Activated B cell treated with CpG ODN at 0.5 μM for 24 hours (primary cell): ENCODE measurements at regions of chr9 and their contacts with region 1.

Region 1: DNA sequence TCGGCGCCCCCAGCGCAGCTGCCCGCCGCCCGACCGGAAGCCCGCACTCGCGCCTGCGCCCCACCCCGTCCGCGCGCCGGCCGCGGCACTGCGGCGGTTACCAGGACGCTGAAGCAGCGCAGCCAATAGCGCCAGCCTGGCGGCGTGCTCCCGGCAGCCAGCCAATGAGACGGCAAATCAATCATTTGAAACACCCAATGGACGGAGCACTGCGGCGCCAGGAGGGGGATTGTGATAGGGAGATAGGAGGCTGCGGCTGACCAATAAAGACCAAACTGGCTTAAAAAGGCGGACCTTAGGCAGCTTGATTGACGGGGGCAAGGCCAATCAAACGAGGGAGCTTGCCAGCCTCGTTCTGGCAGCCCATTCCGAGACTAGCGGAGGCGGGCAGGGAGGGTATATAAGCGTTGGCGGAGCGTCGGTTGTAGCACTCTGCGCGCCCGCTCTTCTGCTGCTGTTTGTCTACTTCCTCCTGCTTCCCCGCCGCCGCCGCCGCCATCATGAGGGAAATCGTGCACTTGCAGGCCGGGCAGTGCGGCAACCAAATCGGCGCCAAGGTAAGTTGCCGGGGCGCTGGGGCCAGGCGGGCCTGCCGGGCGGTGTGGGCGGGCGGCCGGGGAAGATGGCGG is at the start of gene TUBB4B:
- DNase-seq: peak; percentile 95
- ATAC-seq: peak; percentile 75
- H3K4me3 Mint-ChIP-seq: peak within 1 kb of the TSS; percentile 88
- H3K27ac Mint-ChIP-seq: peak within 1 kb of the TSS; percentile 93
- H3K4me1 Mint-ChIP-seq: peaks cover 50% of the 10 kb centered on the region
- H3K27me3 Mint-ChIP-seq: no peaks in the 10 kb centered on the region
- CTCF ChIP-seq: no peak
- total RNA-seq, gene TUBB4B: 182 and 197 TPM in 2 replicates

Region 2: DNA sequence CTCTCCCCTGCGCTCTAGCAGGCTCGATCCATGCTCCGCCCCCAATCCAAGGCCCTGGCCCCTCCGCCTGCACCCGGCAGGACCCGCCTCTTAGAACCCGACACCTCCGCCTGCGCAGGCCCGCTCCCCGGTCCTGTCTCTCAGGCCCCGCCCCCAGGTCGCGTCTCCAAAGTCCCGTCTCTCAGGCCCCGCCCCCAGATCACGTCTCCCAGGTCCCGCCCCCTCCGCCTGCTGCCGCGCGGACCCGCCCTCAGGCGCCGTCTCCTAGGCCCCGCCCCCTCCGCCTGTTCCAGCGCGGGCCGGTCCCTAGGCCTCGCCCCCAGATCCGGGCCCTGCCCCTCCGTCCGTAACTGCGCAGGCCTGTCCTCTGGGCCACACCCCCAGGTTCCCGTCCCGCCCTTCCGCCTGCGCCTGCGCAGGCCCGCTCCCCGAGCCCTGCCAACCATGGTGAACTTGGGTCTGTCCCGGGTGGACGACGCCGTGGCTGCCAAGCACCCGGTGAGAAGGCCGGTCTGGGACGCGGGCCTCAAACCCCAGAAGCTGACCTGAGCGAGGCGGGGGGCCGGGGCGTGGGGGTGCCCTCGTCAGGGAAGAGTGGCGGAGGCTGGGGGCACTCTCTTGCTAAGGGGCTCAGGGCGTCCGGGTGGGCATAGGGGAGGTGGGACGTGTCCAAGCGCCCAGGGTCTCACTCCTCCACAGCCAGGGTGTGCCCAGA is 449.9 kb before region 1 on chr9 and contains the start of gene TMEM141:
- CTCF ChIA-PET with region 1: no interaction called
- POLR2A ChIA-PET with region 1: interaction called, 4 read pairs
- intact Hi-C with region 1: loop called (anchors 2 kb)
- DNase-seq: peak; percentile 99
- ATAC-seq: peak; percentile 87
- H3K4me3 Mint-ChIP-seq: peak within 1 kb of the TSS; percentile 86
- H3K27ac Mint-ChIP-seq: peak within 1 kb of the TSS; percentile 90
- H3K4me1 Mint-ChIP-seq: peaks cover 21% of the 10 kb centered on the region
- H3K27me3 Mint-ChIP-seq: no peaks in the 10 kb centered on the region
- CTCF ChIP-seq: no peak
- total RNA-seq, gene TMEM141: 34.9 and 35.8 TPM in 2 replicates

Region 3: DNA sequence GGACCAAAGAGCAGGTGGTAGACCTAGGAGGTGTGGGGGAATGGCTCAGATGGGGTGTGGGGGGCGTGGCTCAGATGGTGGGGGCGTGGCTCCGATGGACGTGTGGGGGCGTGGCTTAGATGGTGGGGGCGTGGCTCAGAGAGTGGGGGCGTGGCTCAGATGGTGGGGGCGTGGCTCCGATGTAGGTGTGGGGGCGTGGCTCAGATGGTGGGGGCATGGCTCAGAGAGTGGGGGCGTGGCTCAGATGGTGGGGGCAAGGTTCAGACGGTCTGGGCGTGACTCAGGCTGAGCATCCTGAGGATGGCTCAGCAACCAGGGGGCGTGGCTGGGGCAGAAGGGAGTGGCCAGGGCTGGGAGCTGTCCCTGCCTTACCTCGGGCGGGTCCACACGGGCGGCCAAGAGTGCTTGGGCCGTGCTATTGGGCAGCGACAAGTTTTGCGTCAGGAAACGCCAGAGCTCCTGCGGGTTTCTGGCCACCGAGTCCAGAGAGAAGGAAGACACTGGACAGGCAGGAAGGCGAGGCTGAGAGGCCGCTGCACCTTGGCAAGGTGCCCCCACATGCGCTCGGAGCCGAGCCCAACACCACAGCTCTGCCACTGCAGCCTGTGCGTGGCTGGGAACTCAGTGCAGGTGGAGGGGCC is 218.9 kb before region 1 on chr9:
- CTCF ChIA-PET with region 1: no interaction called
- POLR2A ChIA-PET with region 1: no interaction called
- intact Hi-C with region 1: no loop called
- DNase-seq: no peak
- ATAC-seq: peak; percentile 71
- H3K4me3 Mint-ChIP-seq: no peak overlapping the region
- H3K27ac Mint-ChIP-seq: no peak overlapping the region
- H3K4me1 Mint-ChIP-seq: peaks cover 15% of the 10 kb centered on the region
- H3K27me3 Mint-ChIP-seq: no peaks in the 10 kb centered on the region
- CTCF ChIP-seq: no peak

Region 4: GRCh38 chr9:137114610-137115391 is 126.2 kb before region 1 on chr9 and contains the start of gene DPP7:
- CTCF ChIA-PET with region 1: interaction called, 8 read pairs
- POLR2A ChIA-PET with region 1: interaction called, 22 read pairs
- intact Hi-C with region 1: loop called (anchors 1 kb)
- DNase-seq: peak; percentile 84
- ATAC-seq: peak; percentile 91
- H3K4me3 Mint-ChIP-seq: peak within 1 kb of the TSS; percentile 74
- H3K27ac Mint-ChIP-seq: no peak within 1 kb of the TSS
- H3K4me1 Mint-ChIP-seq: peaks cover 21% of the 10 kb centered on the region
- H3K27me3 Mint-ChIP-seq: no peaks in the 10 kb centered on the region
- CTCF ChIP-seq: no peak
- total RNA-seq, gene DPP7: 254 and 259 TPM in 2 replicates

Region 5: DNA sequence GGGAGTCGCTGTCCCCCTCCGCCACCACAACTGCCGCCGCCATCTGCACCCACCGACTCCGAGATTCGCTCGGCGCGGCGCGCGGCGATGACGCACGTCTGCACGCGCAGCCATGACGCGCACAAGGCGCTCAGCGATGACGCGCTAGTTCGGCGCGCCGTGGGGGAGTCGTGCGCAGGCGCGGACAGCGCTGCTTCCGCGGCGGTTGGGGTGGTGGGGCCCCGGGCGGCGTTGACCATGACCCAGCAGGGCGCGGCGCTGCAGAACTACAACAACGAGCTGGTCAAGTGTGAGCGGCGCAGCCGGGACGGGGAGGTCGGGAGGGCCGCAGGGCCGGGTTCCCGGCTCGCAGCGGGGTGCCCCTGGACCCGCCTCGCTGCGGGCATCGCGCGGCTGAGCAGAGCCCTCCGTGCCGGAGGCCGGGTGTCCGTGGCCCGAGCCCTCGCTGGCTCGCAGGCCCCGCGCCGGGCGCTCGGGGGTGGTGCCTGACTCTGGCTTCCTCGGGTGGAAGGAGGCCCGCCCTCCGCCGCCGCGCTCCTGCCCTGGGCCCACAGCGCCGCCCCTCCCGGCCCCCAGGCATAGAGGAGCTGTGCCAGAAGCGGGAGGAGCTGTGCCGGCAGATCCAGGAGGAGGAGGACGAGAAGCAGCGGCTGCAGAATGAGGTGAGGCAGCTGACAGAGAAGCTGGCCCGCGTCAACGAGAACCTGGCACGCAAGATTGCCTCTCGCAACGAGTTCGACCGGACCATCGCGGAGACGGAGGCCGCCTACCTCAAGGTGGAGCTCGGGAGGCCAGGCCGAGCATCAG is 52.3 kb before region 1 on chr9 and contains the starts of genes ANAPC2 and SSNA1:
- CTCF ChIA-PET with region 1: interaction called, 7 read pairs
- POLR2A ChIA-PET with region 1: interaction called, 20 read pairs
- intact Hi-C with region 1: loop called (anchors 1 kb)
- DNase-seq: peak; percentile 99
- ATAC-seq: peak; percentile 79
- H3K4me3 Mint-ChIP-seq: peak within 1 kb of the TSS; percentile 92
- H3K27ac Mint-ChIP-seq: peak within 1 kb of the TSS; percentile 91
- H3K4me1 Mint-ChIP-seq: peaks cover 36% of the 10 kb centered on the region
- H3K27me3 Mint-ChIP-seq: no peaks in the 10 kb centered on the region
- CTCF ChIP-seq: no peak
- total RNA-seq, gene ANAPC2: 75.7 and 93.9 TPM in 2 replicates
- total RNA-seq, gene SSNA1: 71.9 and 76.8 TPM in 2 replicates

Region 6: DNA sequence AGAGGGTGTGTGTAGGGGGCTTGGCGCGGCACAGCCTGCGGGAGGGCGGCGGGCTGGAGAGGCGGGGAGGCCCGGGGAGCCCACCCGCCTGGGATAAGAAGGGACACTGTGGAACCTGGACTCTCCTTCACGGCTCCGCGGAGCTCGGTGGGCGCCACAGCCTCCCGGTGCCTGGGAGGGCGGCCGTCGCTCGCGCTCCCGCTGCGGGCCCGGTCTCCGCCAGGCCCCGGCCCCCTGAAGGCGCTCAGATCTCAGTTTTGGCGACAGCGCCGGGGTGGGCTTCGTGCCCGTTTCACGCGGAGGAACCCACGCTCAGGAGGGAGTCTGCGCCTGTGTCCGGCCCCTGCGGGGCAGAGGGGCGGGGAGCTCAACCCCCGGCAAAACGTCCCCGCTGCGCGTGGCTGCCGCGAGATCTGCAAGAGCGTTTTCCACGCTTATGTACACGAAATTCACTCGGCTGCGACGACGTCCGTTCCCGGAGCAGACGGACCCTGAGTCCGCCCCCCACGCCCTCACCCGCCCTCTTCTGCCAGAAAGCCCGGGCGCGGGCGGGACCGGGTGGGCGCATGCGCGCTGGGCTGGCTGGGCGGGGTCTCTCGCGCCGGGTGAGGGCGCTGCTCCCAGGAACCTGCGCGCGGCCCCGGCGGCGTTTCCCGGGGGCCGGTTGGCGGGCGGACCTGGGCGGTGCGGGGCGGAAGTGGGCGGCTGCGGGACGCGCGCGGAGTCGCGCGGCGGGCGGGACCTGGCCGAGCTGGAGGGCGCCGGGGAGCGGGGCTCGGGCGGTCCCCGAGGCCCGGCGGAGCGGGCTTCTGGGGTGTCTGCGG is 13.9 kb after region 1 on chr9 and contains the start of gene NELFB:
- CTCF ChIA-PET with region 1: interaction called, 10 read pairs
- POLR2A ChIA-PET with region 1: interaction called, 160 read pairs
- intact Hi-C with region 1: loop called (anchors 1 kb)
- DNase-seq: peak; percentile 100
- ATAC-seq: peak; percentile 90
- H3K4me3 Mint-ChIP-seq: peak within 1 kb of the TSS; percentile 90
- H3K27ac Mint-ChIP-seq: peak within 1 kb of the TSS; percentile 72
- H3K4me1 Mint-ChIP-seq: peaks cover 19% of the 10 kb centered on the region
- H3K27me3 Mint-ChIP-seq: no peaks in the 10 kb centered on the region
- CTCF ChIP-seq: no peak
- total RNA-seq, gene NELFB: 56.1 and 58.2 TPM in 2 replicates

Region 7: DNA sequence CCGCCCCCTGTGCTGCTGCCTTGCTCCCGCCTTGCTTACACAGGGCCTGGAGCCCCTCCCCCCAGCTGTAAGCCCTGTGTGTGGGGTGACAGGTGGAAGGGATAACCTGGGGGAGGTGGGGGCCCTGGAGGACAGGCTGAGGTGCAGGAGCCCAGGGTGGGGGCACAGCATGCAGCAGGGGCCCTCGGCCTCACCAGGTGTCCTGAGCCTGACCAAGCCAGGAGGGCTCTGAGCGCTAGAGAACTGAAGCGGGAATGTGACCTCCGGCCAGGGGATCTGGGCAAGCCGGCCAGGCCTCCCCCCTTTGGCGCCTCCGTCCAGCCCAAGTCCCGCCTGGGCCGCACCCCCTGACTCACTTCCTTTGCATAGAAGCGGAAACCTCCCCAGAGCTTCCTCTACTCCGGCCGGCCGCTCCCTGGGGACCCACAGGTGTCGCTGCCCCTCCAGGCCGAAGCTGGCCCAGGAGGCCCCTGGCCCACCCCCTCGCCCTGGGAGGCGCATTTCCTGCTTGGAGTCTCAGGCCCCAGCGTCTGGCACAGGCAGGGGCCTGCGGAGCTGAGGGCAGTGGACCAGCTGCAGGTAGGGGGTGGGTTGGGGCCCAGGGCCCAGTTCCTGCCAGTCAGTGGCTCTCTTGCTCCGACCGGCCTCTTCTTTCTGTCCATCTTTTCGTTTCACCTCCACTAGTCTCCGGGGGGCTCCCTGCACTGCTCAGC is 36.5 kb after region 1 on chr9 and contains the start of gene TOR4A:
- CTCF ChIA-PET with region 1: interaction called, 5 read pairs
- POLR2A ChIA-PET with region 1: interaction called, 32 read pairs
- intact Hi-C with region 1: loop called (anchors 1 kb)
- DNase-seq: peak; percentile 61
- ATAC-seq: peak; percentile 70
- H3K4me3 Mint-ChIP-seq: peak within 1 kb of the TSS; percentile 85
- H3K27ac Mint-ChIP-seq: peak within 1 kb of the TSS; percentile 93
- H3K4me1 Mint-ChIP-seq: peaks cover 47% of the 10 kb centered on the region
- H3K27me3 Mint-ChIP-seq: no peaks in the 10 kb centered on the region
- CTCF ChIP-seq: no peak
- total RNA-seq, gene TOR4A: 7.9 and 9.1 TPM in 2 replicates

Region 8: DNA sequence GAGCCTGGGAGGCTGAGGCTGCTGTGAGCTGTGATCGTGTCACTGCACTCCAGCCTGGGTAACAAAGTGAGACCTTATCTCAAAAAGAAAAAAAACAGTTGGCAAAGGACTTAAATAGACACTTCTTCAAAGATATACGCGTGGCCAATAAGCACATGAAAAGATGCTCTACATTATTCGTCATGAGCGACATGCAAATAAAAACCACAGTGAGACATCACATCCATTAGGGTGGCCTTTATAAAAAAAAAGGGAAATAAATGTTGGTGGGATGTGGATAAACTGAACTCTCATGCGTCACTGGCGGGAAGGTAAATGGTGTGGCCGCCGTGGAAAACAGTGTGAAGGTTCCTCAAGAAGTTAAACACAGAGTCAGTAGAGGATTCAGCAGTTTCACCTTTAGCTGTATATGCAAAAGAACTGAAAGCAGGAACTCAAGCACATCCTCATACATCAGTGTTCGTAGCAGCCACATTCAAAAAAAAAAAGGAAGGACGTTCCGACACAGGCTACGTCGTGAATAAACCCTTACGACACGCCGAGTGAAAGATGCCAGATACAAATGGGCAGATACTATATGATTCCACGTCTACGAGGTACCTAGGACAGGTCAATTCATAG is 85.6 kb after region 1 on chr9:
- CTCF ChIA-PET with region 1: no interaction called
- POLR2A ChIA-PET with region 1: interaction called, 5 read pairs
- intact Hi-C with region 1: loop called (anchors 2 kb)
- DNase-seq: no peak
- ATAC-seq: peak; percentile 94
- H3K4me3 Mint-ChIP-seq: peak overlapping the region; percentile 84
- H3K27ac Mint-ChIP-seq: peak overlapping the region; percentile 89
- H3K4me1 Mint-ChIP-seq: peaks cover 30% of the 10 kb centered on the region
- H3K27me3 Mint-ChIP-seq: peaks cover 10% of the 10 kb centered on the region
- CTCF ChIP-seq: no peak